A549 (cell line): ENCODE measurements at regions of chr12 and their contacts with region 1.

Region 1: DNA sequence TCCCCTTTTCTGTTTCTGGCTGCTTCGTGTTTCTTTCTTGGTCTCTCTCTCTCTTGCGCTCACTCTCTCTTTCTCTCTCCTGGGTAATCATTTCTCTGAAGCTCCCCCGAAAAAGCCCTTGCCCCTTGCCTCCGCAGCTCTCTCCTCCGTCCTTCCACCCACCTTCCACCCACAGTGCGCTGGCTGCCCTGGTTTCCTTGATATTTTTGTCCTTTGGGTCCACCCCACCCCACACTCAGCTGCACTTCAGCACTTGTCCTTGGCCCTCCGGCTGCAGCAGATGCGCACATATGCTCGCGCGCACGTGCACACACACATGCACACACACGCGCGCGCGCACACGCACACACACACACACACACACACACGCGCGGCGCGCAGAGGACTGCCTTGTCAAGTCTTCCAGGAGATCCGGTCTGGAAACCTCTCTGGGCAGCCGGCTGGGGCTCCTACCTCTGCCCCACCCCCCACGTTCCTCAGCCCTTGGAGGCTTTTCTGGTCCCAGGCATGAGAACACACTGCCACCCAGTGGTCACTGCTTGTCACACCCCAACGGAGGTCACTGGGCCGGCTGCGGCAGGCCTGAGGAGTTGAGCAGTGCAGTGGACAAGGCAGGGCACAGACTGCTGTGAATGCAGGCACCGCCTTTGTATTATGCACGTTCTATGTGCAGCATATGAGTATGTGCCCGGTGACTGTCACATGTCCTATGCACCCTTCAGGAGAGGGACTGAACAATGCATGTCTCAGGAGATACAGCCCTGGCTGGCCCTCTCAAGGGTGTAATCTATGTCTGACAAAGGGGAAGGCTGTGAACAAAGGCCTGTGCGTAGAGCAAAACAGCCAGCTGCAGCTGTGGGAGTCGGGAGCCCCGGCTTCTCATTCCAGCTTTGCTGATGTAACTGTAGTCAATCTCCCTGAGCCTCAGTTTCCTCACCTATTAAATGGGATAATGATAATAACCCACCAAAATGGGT is 6.5 kb downstream of the LAG3 start:
- DNase-seq: peak; percentile 71 to 91
- ATAC-seq: peak; percentile 94 to 97
- H3K4me3 ChIP-seq: peak overlapping the region; percentile 30; the same call in 2 of the 3 replicates
- H3K27ac ChIP-seq: peak overlapping the region; percentile 34 to 80; a peak in 4 of 6 replicates
- H3K4me1 ChIP-seq: peaks cover 15% of the 10 kb centered on the region; the same call in 2 of the 3 replicates
- CTCF ChIP-seq: peak; percentile 94
- EP300 ChIP-seq: no peak
- POLR2A ChIP-seq: no peak
- RAD21 ChIP-seq: peak; percentile 98 to 99

Region 2: DNA sequence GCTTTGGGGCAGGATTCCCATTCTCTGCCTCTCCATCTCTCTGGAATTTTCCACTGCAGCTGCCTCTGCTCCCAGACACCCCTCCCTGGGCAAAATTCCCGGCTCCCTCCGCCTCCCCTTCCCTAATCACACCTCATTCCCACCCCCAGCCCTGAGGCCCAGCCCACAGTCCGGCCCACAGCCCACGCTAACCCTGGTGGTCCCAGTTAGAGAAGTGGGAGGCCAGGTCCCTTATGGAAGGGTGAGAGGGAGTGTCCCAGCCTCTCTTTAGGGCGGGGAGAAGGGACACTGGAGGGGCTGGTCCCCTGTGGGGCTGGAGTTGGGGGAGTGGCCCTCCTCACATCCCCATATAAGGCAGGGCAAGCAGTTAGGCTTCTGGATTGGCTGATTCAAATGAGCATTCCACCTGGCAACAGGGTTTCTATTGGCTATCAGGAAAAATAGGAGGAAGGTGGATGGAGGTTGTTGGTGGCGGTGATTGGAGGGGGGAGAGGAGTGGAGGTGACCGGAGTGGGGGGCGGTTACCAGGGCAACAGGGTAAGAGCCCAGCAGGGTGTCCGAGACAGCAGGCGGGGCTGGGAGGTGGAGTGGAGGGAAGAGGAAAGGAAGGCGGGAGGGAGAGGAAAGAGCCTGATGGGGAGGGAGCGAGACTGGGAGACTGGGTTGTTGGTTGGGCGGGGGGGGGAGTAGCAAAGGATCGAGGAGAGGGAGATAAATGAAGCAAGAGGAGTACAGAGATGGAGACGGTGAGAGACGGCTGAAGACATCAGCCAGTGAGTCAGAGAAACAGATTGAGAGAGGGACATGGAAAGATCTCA is 14.6 kb before region 1 on chr12:
- CTCF ChIA-PET with region 1: interaction called, 670 read pairs
- POLR2A ChIA-PET with region 1: interaction called, 22 read pairs
- DNase-seq: peak; percentile 100
- ATAC-seq: peak; percentile 69 to 87
- H3K4me3 ChIP-seq: peak overlapping the region; percentile 97
- H3K27ac ChIP-seq: peak overlapping the region; percentile 95 to 99
- H3K4me1 ChIP-seq: peaks cover 39% of the 10 kb centered on the region
- CTCF ChIP-seq: no peak
- EP300 ChIP-seq: no peak
- POLR2A ChIP-seq: peak; percentile 47
- RAD21 ChIP-seq: no peak

Region 3: GRCh38 chr12:6792522-6793201 is 13.8 kb after region 1 on chr12:
- CTCF ChIA-PET with region 1: interaction called, 18 read pairs
- POLR2A ChIA-PET with region 1: no interaction called
- DNase-seq: no peak
- ATAC-seq: peak; percentile 25 to 43; a peak in 5 of 6 replicates
- H3K4me3 ChIP-seq: no peak overlapping the region
- H3K27ac ChIP-seq: no peak overlapping the region
- H3K4me1 ChIP-seq: no peaks in the 10 kb centered on the region
- CTCF ChIP-seq: no peak
- EP300 ChIP-seq: no peak
- POLR2A ChIP-seq: no peak
- RAD21 ChIP-seq: no peak